ENCODE measurements at regions of chr1 and their contacts with region 1.

Region 1: GRCh38 chr1:221704306-221704705 is 37.6 kb downstream of the DUSP10 start:
- DNase-seq: no peak
- H3K4me3 ChIP-seq: no peak overlapping the region
- H3K27me3 ChIP-seq: no peaks in the 10 kb centered on the region
- CTCF ChIP-seq: no peak

Region 2: GRCh38 chr1:221718381-221719277 is 14.3 kb after region 1 on chr1:
- CTCF ChIA-PET with region 1: interaction called, 3 read pairs
- POLR2A ChIA-PET with region 1: interaction called, 19 read pairs
- DNase-seq: peak; percentile 98
- H3K4me3 ChIP-seq: no peak overlapping the region
- H3K27me3 ChIP-seq: no peaks in the 10 kb centered on the region
- CTCF ChIP-seq: no peak

Region 3: GRCh38 chr1:222171005-222171404 is 466.7 kb after region 1 on chr1:
- CTCF ChIA-PET with region 1: no interaction called
- POLR2A ChIA-PET with region 1: no interaction called
- DNase-seq: no peak
- H3K4me3 ChIP-seq: no peak overlapping the region
- H3K27me3 ChIP-seq: no peaks in the 10 kb centered on the region
- CTCF ChIP-seq: peak; percentile 60